Tibial artery (tissue), 4 donors: ENCODE measurements at regions of chr14 and their contacts with region 1.

Region 1: GRCh38 chr14:55086938-55087337 is 35.5 kb downstream of the MAPK1IP1L start:
- DNase-seq: no peak
- H3K4me3 ChIP-seq: no peak overlapping the region
- H3K27ac ChIP-seq: no peak overlapping the region
- H3K4me1 ChIP-seq: peaks cover 0 to 6% (median 0%) of the 10 kb centered on the region in 4 donors
- H3K27me3 ChIP-seq: no peaks in the 10 kb centered on the region
- CTCF ChIP-seq: no peak

Region 2: GRCh38 chr14:55160989-55161388 is 74.1 kb after region 1 on chr14:
- intact Hi-C with region 1: loop called (anchors 2 kb)
- DNase-seq: no peak
- H3K4me3 ChIP-seq: no peak overlapping the region
- H3K27ac ChIP-seq: no peak overlapping the region
- H3K4me1 ChIP-seq: no peaks in the 10 kb centered on the region
- H3K27me3 ChIP-seq: no peaks in the 10 kb centered on the region
- CTCF ChIP-seq: peak; percentile 69 to 72